ENCODE measurements at regions of chr6 and their contacts with region 1.

Region 1: DNA sequence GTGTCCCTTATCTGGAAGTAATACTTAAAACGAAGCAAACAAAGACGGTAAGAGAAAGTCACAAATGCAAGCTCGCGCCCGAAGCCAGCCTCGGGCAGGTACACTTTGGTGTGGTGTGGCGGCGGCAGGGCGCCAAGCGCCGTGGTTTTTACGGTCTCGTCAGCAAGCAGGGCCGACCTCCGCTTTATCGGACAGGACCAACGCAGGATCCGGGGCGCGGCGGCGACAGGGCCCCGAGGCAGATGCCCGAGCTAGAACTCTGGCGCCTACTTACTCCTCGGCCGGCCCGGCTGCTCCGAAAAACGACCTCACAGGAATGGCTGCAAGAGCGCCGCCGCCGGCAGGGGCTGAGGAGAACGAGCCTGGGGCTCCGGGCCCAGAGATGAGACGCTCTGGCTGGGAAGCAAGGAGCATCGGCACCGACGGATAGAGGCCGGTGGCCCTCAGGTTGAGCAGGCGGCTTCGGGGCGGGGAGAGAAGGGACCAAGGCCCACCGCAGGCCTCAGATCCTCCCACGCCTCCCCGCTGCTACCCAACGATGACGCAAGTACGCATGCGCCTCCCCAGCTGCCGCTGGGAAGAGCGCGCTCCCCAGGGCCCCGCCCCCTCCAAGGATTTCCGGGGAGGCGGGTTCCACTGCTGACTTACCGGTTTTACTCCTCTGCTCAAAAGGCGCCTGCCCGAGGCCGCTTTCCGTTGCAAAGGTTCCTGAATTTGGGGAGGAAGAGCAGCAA is 60.6 kb downstream of the FAM217A start:
- DNase-seq: peak; percentile 94 to 96 (median 95)
- H3K4me3 ChIP-seq: peak overlapping the region; percentile 57 to 64
- H3K4me3 Mint-ChIP-seq: peak overlapping the region; percentile 89 to 99 (median 96)
- H3K27ac ChIP-seq: peak overlapping the region; percentile 91
- H3K27ac Mint-ChIP-seq: peak overlapping the region; percentile 90 to 98 (median 96)
- H3K4me1 ChIP-seq: peaks cover 71% of the 10 kb centered on the region
- H3K4me1 Mint-ChIP-seq: peaks cover 49 to 88% (median 66%) of the 10 kb centered on the region in 4 donors
- H3K27me3 ChIP-seq: no peaks in the 10 kb centered on the region
- H3K27me3 Mint-ChIP-seq: no peaks in the 10 kb centered on the region

Region 2: DNA sequence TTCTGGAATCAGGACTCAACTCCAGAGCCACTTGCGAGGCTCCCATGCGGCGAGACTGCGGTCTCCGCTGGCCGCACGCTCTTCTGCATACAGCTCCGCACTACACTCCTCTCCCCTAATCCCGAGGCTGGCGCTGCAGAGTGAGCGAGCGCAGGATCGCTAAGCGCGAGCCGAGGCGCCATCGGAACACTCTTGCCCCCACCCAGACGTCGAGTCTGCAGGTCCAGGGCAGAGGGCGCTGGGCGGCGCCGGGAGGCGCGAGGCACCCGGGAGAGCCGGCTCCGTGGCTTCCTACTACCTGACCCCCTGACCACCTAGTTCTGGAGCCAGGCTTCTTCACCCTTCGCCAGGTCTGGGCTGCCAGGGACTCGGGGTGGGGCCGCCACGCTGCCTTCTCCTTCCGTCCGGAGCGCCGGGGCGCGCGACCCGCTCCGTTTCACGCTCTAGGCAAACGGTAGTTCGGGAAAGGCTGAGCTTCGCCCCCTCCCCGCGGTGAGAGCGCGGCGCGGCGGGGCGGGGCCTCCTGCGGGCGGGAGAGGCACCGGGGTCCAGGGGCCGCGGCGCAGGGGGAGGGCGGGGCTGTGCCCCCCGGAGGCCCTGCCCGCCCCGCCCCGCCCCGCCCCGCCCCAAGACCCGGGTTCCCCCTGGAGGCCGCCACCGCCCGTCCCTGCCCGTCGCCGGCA is 855.6 kb before region 1 on chr6:
- CTCF ChIA-PET with region 1: no interaction called
- POLR2A ChIA-PET with region 1: interaction called, 3 read pairs
- intact Hi-C with region 1: loop called (anchors 5 kb)
- DNase-seq: peak; percentile 48 to 72 (median 55)
- H3K4me3 ChIP-seq: peak overlapping the region; percentile 53 to 61
- H3K4me3 Mint-ChIP-seq: peak overlapping the region; percentile 84 to 91 (median 85)
- H3K27ac ChIP-seq: peak overlapping the region; percentile 58
- H3K27ac Mint-ChIP-seq: peak overlapping the region; percentile 81 to 97 (median 87)
- H3K4me1 ChIP-seq: peaks cover 35% of the 10 kb centered on the region
- H3K4me1 Mint-ChIP-seq: peaks cover 27 to 49% (median 33%) of the 10 kb centered on the region in 4 donors
- H3K27me3 ChIP-seq: no peaks in the 10 kb centered on the region
- H3K27me3 Mint-ChIP-seq: peaks cover 0 to under 1% of the 10 kb centered on the region in 2 donors

Region 3: DNA sequence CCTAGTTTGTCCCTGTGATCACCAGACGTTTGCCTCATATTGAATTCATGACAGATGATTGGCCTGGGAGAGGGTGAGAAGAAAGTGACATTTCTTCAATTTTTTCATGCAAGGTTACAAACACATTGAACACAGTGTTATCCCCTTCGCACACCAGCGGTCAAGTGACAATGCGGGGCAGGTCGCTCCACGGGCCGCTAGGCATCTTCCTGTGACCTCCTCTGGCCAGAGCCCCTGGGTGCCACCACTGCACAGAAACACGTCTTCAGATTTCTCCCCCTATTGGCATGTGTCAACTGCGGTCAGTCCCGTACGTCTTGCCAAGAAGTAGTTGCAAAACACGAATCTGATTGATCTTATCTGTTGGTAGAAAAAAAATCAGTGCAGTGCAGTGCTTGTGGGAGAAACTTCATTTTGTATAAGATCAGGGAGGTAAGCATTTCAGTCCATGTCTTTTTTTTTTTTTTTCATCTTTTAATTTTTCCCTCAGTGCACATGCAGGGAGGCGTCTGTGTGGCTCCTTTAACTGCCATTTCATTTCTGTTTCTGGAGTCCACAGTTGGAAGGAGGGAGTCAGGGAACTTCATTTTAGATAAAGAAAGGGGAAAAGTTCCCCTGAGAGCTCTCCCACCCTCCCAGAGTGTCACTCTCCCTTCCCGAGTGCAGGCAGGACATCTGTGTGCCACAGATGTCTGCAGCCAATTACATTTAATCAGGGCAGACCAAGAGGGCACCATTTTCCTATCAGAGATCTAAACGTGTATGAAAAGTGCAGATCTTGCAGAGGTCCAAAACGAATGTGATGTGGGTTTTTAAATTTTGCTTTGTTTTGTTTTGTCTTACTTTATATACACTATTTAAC is 363.7 kb before region 1 on chr6:
- CTCF ChIA-PET with region 1: no interaction called
- POLR2A ChIA-PET with region 1: no interaction called
- intact Hi-C with region 1: no loop called
- DNase-seq: no peak
- H3K4me3 ChIP-seq: no peak overlapping the region
- H3K4me3 Mint-ChIP-seq: no peak overlapping the region
- H3K27ac ChIP-seq: no peak overlapping the region
- H3K27ac Mint-ChIP-seq: no peak overlapping the region
- H3K4me1 ChIP-seq: no peaks in the 10 kb centered on the region
- H3K4me1 Mint-ChIP-seq: no peaks in the 10 kb centered on the region
- H3K27me3 ChIP-seq: no peaks in the 10 kb centered on the region
- H3K27me3 Mint-ChIP-seq: peaks cover 6 to 11% of the 10 kb centered on the region in 2 donors

Region 4: GRCh38 chr6:3742426-3743344 is 275.7 kb before region 1 on chr6:
- CTCF ChIA-PET with region 1: interaction called, 24 read pairs
- POLR2A ChIA-PET with region 1: interaction called, 6 read pairs
- intact Hi-C with region 1: no loop called
- DNase-seq: peak; percentile 79 to 84 (median 81)
- H3K4me3 ChIP-seq: peak overlapping the region in 1 of 2 donors; percentile 26
- H3K4me3 Mint-ChIP-seq: peak overlapping the region; percentile 4 to 77 (median 61)
- H3K27ac ChIP-seq: no peak overlapping the region
- H3K27ac Mint-ChIP-seq: peak overlapping the region in 5 of 7 donors; percentile 34 to 83 (median 68)
- H3K4me1 ChIP-seq: peaks cover 12% of the 10 kb centered on the region
- H3K4me1 Mint-ChIP-seq: peaks cover 6 to 13% (median 11%) of the 10 kb centered on the region in 4 donors
- H3K27me3 ChIP-seq: no peaks in the 10 kb centered on the region
- H3K27me3 Mint-ChIP-seq: peaks cover 3 to 4% of the 10 kb centered on the region in 2 donors

Region 5: DNA sequence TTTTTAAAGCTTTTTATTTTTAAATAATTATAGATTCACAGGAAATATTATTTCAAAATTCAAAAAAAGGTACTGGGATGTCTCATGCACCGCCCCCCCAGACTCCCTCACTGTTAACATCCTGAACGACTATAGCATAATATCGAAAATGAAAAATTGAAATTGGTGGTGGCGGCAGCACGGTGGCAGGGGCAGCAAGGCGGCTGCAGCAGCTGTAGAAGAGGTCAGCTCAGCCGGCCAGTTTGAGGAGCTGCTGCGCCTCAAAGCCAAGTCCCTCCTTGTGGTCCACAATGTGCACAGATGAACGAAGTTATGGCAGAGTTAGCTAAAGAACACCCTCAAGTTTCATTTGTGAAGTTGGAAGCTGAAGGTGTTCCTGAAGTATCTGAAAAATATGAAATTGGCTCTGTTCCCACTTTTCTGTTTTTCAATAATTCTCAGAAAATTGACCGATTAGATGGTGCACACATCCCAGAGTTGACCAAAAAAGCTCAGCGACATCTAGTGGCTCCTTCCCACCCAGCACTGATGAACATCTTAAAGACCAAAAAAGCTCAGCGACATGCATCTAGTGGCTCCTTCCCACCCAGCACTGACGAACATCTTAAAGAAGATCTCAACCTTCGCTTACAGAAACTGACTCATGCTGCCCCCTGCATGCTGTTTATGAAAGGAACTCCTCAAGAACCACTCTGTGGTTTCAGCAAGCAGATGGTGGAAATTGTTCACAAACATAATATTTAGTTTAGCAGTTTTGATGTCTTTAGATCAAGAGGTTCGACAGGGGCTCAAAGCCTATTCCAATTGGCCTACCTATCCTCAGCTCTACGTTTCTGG is 40.2 kb before region 1 on chr6:
- CTCF ChIA-PET with region 1: interaction called, 25 read pairs
- POLR2A ChIA-PET with region 1: interaction called, 3 read pairs
- intact Hi-C with region 1: no loop called
- DNase-seq: peak; percentile 50 to 66 (median 56)
- H3K4me3 ChIP-seq: no peak overlapping the region
- H3K4me3 Mint-ChIP-seq: peak overlapping the region in 6 of 8 donors; percentile 49 to 76 (median 63)
- H3K27ac ChIP-seq: no peak overlapping the region
- H3K27ac Mint-ChIP-seq: peak overlapping the region in 2 of 7 donors; percentile 52 to 73
- H3K4me1 ChIP-seq: peaks cover 4% of the 10 kb centered on the region
- H3K4me1 Mint-ChIP-seq: peaks cover 7 to 12% (median 8%) of the 10 kb centered on the region in 4 donors
- H3K27me3 ChIP-seq: no peaks in the 10 kb centered on the region
- H3K27me3 Mint-ChIP-seq: peaks cover 0 to 3% of the 10 kb centered on the region in 2 donors

Region 6: DNA sequence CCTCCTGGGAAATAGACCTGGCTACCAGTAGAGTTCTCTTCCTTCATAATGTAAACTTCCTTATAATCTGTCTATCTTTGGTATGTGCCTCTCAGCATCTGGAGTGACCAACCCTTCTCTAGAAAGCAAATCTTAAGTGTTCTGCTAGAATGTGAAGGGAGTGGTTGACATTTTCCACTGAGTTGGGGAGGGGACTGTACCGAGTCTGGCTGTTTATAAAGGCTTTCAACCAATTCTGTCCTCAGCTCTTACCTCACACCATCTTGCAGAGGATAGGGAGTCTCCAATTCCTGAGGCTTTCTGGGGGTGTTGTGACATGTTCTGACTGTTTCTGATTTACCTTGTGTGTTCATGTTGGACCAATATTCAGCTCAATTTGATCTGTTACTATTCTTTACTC is 21.0 kb after region 1 on chr6:
- CTCF ChIA-PET with region 1: interaction called, 12 read pairs
- POLR2A ChIA-PET with region 1: interaction called, 9 read pairs
- intact Hi-C with region 1: no loop called
- DNase-seq: no peak
- H3K4me3 ChIP-seq: no peak overlapping the region
- H3K4me3 Mint-ChIP-seq: no peak overlapping the region
- H3K27ac ChIP-seq: no peak overlapping the region
- H3K27ac Mint-ChIP-seq: peak overlapping the region in 5 of 7 donors; percentile 12 to 58 (median 42)
- H3K4me1 ChIP-seq: peaks cover 17% of the 10 kb centered on the region
- H3K4me1 Mint-ChIP-seq: peaks cover 21 to 44% (median 32%) of the 10 kb centered on the region in 4 donors
- H3K27me3 ChIP-seq: no peaks in the 10 kb centered on the region
- H3K27me3 Mint-ChIP-seq: no peaks in the 10 kb centered on the region

Region 7: DNA sequence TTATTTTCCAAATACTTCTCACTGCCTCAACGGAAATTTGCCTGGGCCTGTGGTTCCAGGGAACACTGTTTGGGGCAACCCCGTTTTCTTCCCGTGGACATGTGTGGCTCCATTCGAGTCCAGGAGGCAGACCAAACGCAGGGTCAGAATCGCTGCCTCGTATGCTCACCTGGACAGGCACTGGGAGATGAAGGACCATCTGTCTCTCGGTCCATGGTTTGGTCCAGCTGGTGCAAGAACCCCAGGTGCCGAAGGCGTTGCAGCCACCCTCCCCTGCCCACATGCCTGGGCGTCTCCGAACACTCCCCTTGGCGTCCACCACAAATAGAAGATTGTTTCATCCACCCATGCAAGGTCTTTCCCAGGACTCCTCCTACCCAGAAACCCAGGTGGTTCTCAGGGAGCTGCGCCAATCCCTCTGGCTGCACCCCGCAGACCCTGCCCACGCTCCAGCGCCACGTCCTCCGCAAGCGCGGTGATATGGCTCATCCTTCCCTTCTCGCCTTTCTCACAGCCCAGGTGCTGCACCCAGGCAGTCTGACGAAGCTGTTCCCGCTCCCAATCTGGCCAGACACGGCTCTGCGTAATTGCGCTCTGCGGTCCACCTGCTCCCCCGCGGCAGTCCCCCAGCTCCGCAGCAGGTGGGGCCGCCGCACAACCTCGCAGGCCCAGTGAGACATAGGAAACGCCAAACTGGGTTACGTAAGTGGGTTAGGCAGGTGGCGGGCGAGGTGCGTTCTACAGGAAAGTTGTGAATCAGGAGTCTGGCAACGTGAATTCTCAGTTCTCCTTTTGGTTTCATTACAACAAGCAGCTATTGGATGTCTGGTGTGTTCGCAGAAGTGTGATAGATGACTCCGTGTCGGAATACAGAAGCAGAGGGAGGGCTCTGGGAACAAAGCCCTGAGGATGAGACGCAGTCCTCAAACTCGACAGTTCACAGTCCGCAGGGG is 263.3 kb after region 1 on chr6:
- CTCF ChIA-PET with region 1: no interaction called
- POLR2A ChIA-PET with region 1: no interaction called
- intact Hi-C with region 1: no loop called
- DNase-seq: no peak
- H3K4me3 ChIP-seq: no peak overlapping the region
- H3K4me3 Mint-ChIP-seq: peak overlapping the region in 5 of 8 donors; percentile 9 to 55 (median 21)
- H3K27ac ChIP-seq: no peak overlapping the region
- H3K27ac Mint-ChIP-seq: no peak overlapping the region
- H3K4me1 ChIP-seq: no peaks in the 10 kb centered on the region
- H3K4me1 Mint-ChIP-seq: peaks cover 1 to 10% (median 5%) of the 10 kb centered on the region in 4 donors
- H3K27me3 ChIP-seq: no peaks in the 10 kb centered on the region
- H3K27me3 Mint-ChIP-seq: peaks cover 21% of the 10 kb centered on the region in 2 donors

Region 8: GRCh38 chr6:4775584-4776494 is 757.5 kb after region 1 on chr6 and contains the start of gene CDYL:
- CTCF ChIA-PET with region 1: no interaction called
- POLR2A ChIA-PET with region 1: no interaction called
- intact Hi-C with region 1: loop called (anchors 2 kb)
- DNase-seq: peak; percentile 83 to 92 (median 90)
- H3K4me3 ChIP-seq: peak within 1 kb of the TSS; percentile 71 to 75
- H3K4me3 Mint-ChIP-seq: peak within 1 kb of the TSS; percentile 90 to 96 (median 92)
- H3K27ac ChIP-seq: peak within 1 kb of the TSS; percentile 52
- H3K27ac Mint-ChIP-seq: peak within 1 kb of the TSS; percentile 65 to 96 (median 91)
- H3K4me1 ChIP-seq: peaks cover 42% of the 10 kb centered on the region
- H3K4me1 Mint-ChIP-seq: peaks cover 31 to 51% (median 40%) of the 10 kb centered on the region in 4 donors
- H3K27me3 ChIP-seq: no peaks in the 10 kb centered on the region
- H3K27me3 Mint-ChIP-seq: no peaks in the 10 kb centered on the region
- total RNA-seq, gene CDYL: 31.7 to 36.7 TPM